Activated CD4-positive, alpha-beta memory T cell treated with anti-CD3 and anti-CD28 coated beads for 36 hours (primary cell): ENCODE measurements at regions of chr9 and their contacts with region 1.

Region 1: GRCh38 chr9:126228781-126229444 is 97.7 kb upstream of the MVB12B start:
- DNase-seq: peak; percentile 78
- H3K4me3 Mint-ChIP-seq: no peak overlapping the region
- H3K27ac Mint-ChIP-seq: no peak overlapping the region
- H3K4me1 Mint-ChIP-seq: peaks cover 4% of the 10 kb centered on the region
- H3K27me3 Mint-ChIP-seq: peaks cover 30% of the 10 kb centered on the region

Region 2: DNA sequence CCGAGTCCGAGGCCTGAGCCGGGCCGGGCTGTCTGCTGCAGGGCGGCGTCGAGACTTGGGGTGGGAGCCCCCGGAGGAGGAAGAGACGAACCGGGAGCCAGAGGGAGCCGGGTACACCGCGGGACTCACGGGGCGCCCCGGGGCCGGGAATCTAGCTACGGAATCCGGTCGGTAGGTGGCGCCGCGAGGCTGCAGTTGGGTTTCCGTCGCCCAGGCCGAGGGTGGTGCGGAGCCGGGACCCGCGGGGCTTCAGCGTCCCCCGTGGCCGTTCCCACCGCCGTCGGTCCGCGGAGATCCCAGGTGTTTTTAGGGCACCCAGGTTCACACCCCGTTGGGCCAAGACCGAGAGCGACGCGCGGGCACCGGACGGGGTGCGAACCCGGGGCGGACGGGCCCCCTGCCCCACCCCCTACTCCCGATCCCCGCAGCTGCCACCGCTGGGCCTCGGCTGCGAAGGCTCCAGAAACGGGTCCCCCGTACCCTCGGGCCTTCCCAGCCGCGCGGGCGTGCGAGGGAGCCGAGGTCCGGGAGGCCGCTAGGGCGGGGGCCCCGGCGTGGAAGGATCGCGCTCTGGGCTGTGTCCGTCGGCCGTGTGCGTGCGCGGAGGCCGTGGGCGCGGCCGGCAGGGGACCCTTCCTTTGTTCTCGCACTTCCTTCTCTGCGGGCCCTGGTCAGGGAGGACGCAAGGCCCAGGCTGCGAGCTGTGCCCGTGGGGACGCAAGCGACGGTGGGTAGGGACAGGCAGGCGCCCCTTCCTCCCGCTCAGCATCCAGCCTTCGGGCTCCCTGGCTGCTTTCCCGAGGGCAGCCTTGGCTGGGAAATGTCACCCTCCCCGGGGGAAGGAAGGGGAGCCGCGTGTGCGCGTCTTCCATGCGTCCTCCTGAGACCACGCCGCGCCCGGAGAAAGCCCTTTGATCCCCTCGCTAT is 820.7 kb before region 1 on chr9:
- CTCF ChIA-PET with region 1: interaction called, 12 read pairs
- POLR2A ChIA-PET with region 1: no interaction called
- intact Hi-C with region 1: loop called (anchors 5 kb)
- DNase-seq: peak; percentile 82
- H3K4me3 Mint-ChIP-seq: peak overlapping the region; percentile 52
- H3K27ac Mint-ChIP-seq: no peak overlapping the region
- H3K4me1 Mint-ChIP-seq: peaks cover 10% of the 10 kb centered on the region
- H3K27me3 Mint-ChIP-seq: peaks cover 24% of the 10 kb centered on the region